WTC11 (cell line): ENCODE measurements at regions of chr22 and their contacts with region 1.

Region 1: GRCh38 chr22:46250035-46250782 is at the start of gene CDPF1:
- DNase-seq: peak; percentile 85
- ATAC-seq: peak; percentile 89
- H3K4me3 Mint-ChIP-seq: peak within 1 kb of the TSS; percentile 71
- H3K27ac Mint-ChIP-seq: no peak within 1 kb of the TSS
- H3K4me1 Mint-ChIP-seq: peaks cover 13% of the 10 kb centered on the region
- H3K27me3 Mint-ChIP-seq: peaks cover 9% of the 10 kb centered on the region
- CTCF ChIP-seq: no peak
- total RNA-seq, gene CDPF1: 11.3 to 11.7 TPM (median 11.5 TPM) in 3 replicates

Region 2: GRCh38 chr22:46035742-46036557 is 214.3 kb before region 1 on chr22:
- CTCF ChIA-PET with region 1: no interaction called
- POLR2A ChIA-PET with region 1: no interaction called
- DNase-seq: peak; percentile 100
- ATAC-seq: peak; percentile 95
- H3K4me3 Mint-ChIP-seq: peak overlapping the region; percentile 73
- H3K27ac Mint-ChIP-seq: no peak overlapping the region
- H3K4me1 Mint-ChIP-seq: peaks cover 34% of the 10 kb centered on the region
- H3K27me3 Mint-ChIP-seq: no peaks in the 10 kb centered on the region
- CTCF ChIP-seq: no peak

Region 3: DNA sequence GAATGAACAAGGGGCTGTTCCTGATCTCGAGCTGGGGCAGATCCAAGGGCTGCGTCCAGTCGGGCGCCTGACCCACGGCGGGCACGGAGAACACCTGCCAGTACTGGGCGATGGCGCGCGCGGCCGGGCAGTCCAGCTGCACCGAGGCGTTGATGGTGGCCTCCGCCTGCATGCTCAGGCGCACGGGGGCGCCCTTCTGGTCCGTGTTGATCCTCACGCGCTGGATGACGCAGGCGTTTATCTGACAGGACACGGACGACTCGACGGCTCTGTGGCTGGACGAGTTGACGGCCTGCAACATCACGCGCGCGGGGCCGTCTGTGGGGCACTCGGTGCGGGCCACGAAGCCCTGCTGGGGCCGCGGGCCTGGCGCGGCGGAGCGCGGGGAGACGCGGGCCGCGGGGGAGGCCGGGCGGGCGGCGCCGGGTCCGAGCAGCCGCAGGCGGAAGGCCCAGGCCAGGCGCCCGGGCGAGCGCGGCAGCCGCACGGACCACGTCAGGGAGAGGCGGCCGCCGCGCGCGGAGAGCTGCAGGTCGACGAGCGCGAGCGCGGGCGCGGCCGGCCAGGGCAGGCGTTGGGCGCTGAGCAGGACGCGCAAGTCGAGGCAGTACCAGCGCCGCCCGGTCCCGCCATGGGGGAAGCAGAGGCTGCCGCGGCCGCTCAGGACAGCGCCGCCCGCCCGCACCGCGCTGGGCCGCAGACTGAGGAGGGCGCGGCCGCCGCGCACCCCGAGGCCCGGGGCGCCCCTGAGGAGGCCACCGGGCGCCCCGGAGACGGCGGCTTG is 12.4 kb after region 1 on chr22:
- CTCF ChIA-PET with region 1: interaction called, 25 read pairs
- POLR2A ChIA-PET with region 1: interaction called, 4 read pairs
- DNase-seq: peak; percentile 80
- ATAC-seq: peak; percentile 83
- H3K4me3 Mint-ChIP-seq: peak overlapping the region; percentile 53
- H3K27ac Mint-ChIP-seq: no peak overlapping the region
- H3K4me1 Mint-ChIP-seq: peaks cover 4% of the 10 kb centered on the region; the same call in 1 of the 2 replicates
- H3K27me3 Mint-ChIP-seq: peaks cover 96% of the 10 kb centered on the region
- CTCF ChIP-seq: peak; percentile 34; the same call in 1 of the 2 replicates

Region 4: DNA sequence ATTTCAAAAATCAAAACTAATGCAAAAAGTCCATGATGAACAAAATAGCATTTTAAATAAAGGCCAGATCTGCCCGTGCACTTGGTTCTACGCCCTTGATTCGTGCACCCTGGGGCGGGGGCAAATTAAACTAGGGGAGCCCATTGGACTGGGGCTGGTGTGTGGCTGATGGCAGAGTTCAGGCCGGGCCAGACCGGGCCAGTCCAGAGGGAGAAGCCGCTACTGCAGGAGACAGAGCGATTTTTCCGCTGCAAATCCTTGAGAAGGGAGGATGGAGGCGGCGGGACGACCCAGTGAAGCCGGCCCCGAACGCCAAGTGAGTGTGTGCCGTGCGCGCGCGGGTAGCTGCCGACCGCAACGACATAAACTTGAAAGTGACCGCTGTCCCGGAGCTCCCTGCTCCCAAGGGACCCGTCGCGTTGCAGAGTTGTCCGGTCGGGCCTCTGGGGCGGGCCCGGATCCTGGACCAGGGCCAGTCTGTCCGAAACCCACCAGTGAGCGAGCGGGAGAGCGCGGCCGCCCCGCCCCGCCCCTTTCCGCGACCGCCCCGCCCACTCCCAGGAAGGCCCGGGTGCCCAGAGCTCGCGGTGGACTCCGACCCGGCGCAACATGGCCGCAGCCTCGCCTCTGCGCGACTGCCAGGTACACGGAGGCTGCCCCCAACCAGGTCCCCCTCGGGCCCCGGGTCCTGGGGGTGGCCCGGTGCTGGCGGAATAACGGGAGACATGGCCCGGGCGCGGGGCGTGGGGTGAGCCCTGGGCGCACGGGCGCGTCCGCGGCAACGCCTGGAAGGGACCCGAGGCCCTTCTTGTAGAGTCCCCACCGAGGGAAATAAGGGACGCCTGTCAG is 17.4 kb after region 1 on chr22 and contains the start of gene TTC38:
- CTCF ChIA-PET with region 1: interaction called, 25 read pairs
- POLR2A ChIA-PET with region 1: interaction called, 4 read pairs
- DNase-seq: peak; percentile 70
- ATAC-seq: peak; percentile 85
- H3K4me3 Mint-ChIP-seq: peak within 1 kb of the TSS; percentile 86
- H3K27ac Mint-ChIP-seq: no peak within 1 kb of the TSS
- H3K4me1 Mint-ChIP-seq: peaks cover 8% of the 10 kb centered on the region
- H3K27me3 Mint-ChIP-seq: peaks cover 46% of the 10 kb centered on the region
- CTCF ChIP-seq: no peak
- total RNA-seq, gene TTC38: 20.7 to 29.2 TPM (median 27.5 TPM) in 3 replicates

Region 5: GRCh38 chr22:46278656-46279645 is 28.7 kb after region 1 on chr22:
- CTCF ChIA-PET with region 1: no interaction called
- POLR2A ChIA-PET with region 1: no interaction called
- DNase-seq: no peak
- ATAC-seq: no peak
- H3K4me3 Mint-ChIP-seq: no peak overlapping the region
- H3K27ac Mint-ChIP-seq: no peak overlapping the region
- H3K4me1 Mint-ChIP-seq: no peaks in the 10 kb centered on the region
- H3K27me3 Mint-ChIP-seq: no peaks in the 10 kb centered on the region
- CTCF ChIP-seq: no peak

Region 6: GRCh38 chr22:46346680-46347405 is 96.6 kb after region 1 on chr22:
- CTCF ChIA-PET with region 1: no interaction called
- POLR2A ChIA-PET with region 1: no interaction called
- DNase-seq: no peak
- ATAC-seq: no peak
- H3K4me3 Mint-ChIP-seq: no peak overlapping the region
- H3K27ac Mint-ChIP-seq: no peak overlapping the region
- H3K4me1 Mint-ChIP-seq: no peaks in the 10 kb centered on the region
- H3K27me3 Mint-ChIP-seq: no peaks in the 10 kb centered on the region
- CTCF ChIP-seq: no peak